Calu3 (cell line): ENCODE measurements at regions of chr1 and their contacts with region 1.

Region 1: DNA sequence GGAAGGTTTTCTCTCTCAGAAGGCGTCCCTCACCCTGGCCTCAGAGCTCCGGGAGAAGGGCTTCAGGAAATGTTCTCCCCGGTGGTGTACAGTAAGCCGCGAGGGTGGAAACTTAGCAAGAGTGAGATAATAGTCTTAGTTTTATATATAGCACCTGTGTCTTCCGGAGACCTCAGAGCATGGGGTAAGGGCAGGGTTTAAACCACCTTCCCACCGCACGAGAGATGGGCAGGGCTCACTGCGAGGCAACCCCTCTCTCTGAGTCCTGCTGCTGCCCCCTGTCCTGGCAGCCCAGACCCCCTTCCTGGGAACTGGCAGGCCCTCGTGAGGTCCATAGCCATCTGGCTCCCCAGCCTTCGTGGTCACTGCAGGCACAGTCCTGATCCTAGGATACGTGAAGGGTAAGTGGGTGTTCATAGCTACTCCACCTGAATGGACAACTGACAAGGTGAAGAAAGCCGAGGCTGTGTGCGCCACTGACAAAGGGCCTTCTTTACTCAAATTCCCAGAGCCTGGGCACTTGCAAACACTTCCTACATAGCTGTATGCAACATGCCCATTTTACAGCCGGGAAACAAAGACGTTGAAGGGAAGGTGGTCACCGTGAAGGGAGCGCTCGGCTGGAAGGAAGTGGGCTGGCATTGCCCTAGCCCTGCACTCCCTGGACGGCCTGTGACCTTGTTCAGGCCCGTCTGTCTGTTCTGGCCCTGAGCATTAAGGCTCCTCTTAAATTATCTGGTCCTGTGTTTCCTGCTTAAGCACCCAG is 26.9 kb downstream of the ITPKB start:
- DNase-seq: no peak
- H3K4me3 Mint-ChIP-seq: no peak overlapping the region
- H3K27ac Mint-ChIP-seq: no peak overlapping the region
- H3K4me1 Mint-ChIP-seq: peaks cover 6% of the 10 kb centered on the region
- H3K27me3 Mint-ChIP-seq: no peaks in the 10 kb centered on the region
- CTCF ChIP-seq: no peak

Region 2: DNA sequence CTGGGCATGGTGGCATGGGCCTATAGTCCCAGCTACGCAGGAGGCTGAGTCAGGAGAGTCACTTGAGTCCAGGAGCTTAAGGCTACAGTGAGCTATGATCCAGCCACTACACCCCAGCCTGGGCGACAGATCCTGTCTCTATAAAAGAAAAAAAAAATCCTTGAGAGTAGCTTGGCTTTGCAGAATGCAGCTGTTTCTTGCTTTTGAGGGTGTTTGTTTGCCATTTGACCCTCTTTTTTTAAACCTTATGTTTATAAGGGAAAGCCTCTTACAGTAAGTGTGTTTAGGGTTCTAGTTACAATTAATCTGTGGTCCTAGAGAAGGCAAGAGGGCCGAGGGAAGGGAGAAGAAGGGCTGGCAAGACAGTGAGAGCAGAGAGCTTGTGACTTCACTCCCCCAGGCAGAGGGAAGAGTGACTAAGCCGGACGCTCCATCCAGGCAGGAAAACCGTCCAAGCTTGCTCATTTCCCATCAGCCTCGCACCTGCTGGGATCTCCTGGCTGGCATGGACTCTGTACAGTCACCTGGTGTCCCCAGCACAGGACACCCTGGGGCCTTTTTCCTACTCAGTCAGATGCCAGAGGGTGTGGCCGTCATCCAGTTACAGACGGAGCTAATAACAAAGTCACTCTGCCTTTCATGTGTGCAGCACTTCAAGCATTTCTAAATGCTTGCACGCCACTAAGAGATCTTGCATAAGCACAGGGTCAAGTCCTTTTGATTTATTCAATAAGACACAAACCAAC is 102.8 kb after region 1 on chr1:
- CTCF ChIA-PET with region 1: no interaction called
- intact Hi-C with region 1: loop called (anchors 10 kb)
- DNase-seq: peak; percentile 87
- H3K4me3 Mint-ChIP-seq: no peak overlapping the region
- H3K27ac Mint-ChIP-seq: peak overlapping the region; percentile 45
- H3K4me1 Mint-ChIP-seq: peaks cover 14% of the 10 kb centered on the region
- H3K27me3 Mint-ChIP-seq: no peaks in the 10 kb centered on the region
- CTCF ChIP-seq: no peak